ENCODE measurements at regions of chr2 and their contacts with region 1.

Region 1: GRCh38 chr2:96111822-96112510 is 4.4 kb downstream of the ADRA2B start:
- DNase-seq: no peak
- ATAC-seq: no peak
- H3K4me3 ChIP-seq: no peak overlapping the region
- H3K27ac ChIP-seq: no peak overlapping the region
- H3K4me1 ChIP-seq: no peaks in the 10 kb centered on the region
- CTCF ChIP-seq: no peak
- EP300 ChIP-seq: no peak
- POLR2A ChIP-seq: no peak
- RAD21 ChIP-seq: no peak

Region 2: GRCh38 chr2:96024336-96025193 is 87.4 kb before region 1 on chr2:
- CTCF ChIA-PET with region 1: interaction called, 27 read pairs
- POLR2A ChIA-PET with region 1: no interaction called
- DNase-seq: no peak
- ATAC-seq: no peak
- H3K4me3 ChIP-seq: no peak overlapping the region
- H3K27ac ChIP-seq: no peak overlapping the region
- H3K4me1 ChIP-seq: no peaks in the 10 kb centered on the region
- CTCF ChIP-seq: no peak
- EP300 ChIP-seq: no peak
- POLR2A ChIP-seq: no peak
- RAD21 ChIP-seq: no peak

Region 3: DNA sequence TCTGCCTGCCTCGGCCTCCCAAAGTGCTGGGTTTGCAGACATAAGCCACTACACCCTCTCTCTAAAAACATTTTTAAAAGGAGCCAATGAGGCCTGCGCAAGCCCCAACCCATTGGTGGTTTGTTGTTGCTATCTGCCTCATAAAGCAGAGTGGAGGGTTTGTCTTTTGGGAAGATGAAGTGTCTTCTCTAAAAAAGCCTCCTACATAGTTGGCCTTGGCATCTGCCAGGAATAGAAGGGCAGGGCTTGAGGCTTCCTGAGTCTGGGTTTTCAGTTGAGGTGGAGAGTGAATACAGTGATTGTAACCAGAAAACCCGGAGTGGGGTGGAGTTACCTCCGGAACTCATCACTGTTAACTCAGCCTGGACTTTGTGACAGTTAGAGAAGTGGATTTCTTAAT is 102.6 kb after region 1 on chr2:
- CTCF ChIA-PET with region 1: no interaction called
- POLR2A ChIA-PET with region 1: no interaction called
- DNase-seq: no peak
- ATAC-seq: no peak
- H3K4me3 ChIP-seq: no peak overlapping the region
- H3K27ac ChIP-seq: no peak overlapping the region
- H3K4me1 ChIP-seq: peaks cover 6% of the 10 kb centered on the region; the same call in 1 of the 3 replicates
- CTCF ChIP-seq: no peak
- EP300 ChIP-seq: no peak
- POLR2A ChIP-seq: no peak
- RAD21 ChIP-seq: no peak

Region 4: DNA sequence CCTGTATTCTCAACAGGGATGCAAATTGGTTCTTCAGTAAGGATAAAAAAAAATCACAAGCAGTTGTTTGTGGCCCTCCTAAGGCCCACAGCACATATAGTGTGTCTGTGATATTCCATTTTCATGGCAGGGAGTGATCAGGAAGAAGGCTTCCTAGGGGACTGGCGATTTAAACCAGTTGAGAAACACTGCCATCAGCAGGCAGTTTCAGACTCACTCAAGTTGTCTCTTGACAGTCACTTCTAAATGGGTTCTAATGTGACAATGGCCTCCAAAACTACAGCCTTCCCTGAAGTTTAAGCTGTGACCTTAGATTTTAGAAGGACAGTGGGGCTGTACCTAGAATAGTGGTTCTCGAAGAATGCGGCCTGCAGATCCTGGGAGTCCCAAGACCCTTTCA is 160.0 kb after region 1 on chr2:
- CTCF ChIA-PET with region 1: no interaction called
- POLR2A ChIA-PET with region 1: no interaction called
- DNase-seq: peak in 1 of 2 experiments; percentile 26
- ATAC-seq: no peak
- H3K4me3 ChIP-seq: no peak overlapping the region
- H3K27ac ChIP-seq: no peak overlapping the region
- H3K4me1 ChIP-seq: peaks cover 7% of the 10 kb centered on the region
- CTCF ChIP-seq: no peak
- EP300 ChIP-seq: no peak
- POLR2A ChIP-seq: no peak
- RAD21 ChIP-seq: no peak